Breast epithelium (tissue), 4 donors: ENCODE measurements at regions of chr12 and their contacts with region 1.

Region 1: GRCh38 chr12:72547573-72547972 is 275.4 kb downstream of the TRHDE start:
- DNase-seq: no peak
- H3K4me3 ChIP-seq: no peak overlapping the region
- H3K27ac ChIP-seq: no peak overlapping the region
- H3K4me1 ChIP-seq: no peaks in the 10 kb centered on the region
- H3K27me3 ChIP-seq: no peaks in the 10 kb centered on the region
- CTCF ChIP-seq: no peak
- POLR2A ChIP-seq: no peak

Region 2: GRCh38 chr12:71967211-71967610 is 580.4 kb before region 1 on chr12:
- intact Hi-C with region 1: loop called (anchors 10 kb)
- DNase-seq: no peak
- H3K4me3 ChIP-seq: no peak overlapping the region
- H3K27ac ChIP-seq: no peak overlapping the region
- H3K4me1 ChIP-seq: no peaks in the 10 kb centered on the region
- H3K27me3 ChIP-seq: no peaks in the 10 kb centered on the region
- CTCF ChIP-seq: no peak
- POLR2A ChIP-seq: no peak

Region 3: GRCh38 chr12:72574138-72574537 is 26.6 kb after region 1 on chr12:
- intact Hi-C with region 1: no loop called
- DNase-seq: no peak
- H3K4me3 ChIP-seq: no peak overlapping the region
- H3K27ac ChIP-seq: no peak overlapping the region
- H3K4me1 ChIP-seq: no peaks in the 10 kb centered on the region
- H3K27me3 ChIP-seq: no peaks in the 10 kb centered on the region
- CTCF ChIP-seq: no peak
- POLR2A ChIP-seq: no peak